HEK293 (cell line): ENCODE measurements at regions of chrX and their contacts with region 1.

Region 1: GRCh38 chrX:86133761-86134160 is 14.5 kb upstream of the DACH2 start:
- H3K4me3 ChIP-seq: no peak overlapping the region
- H3K27ac ChIP-seq: no peak overlapping the region
- H3K4me1 ChIP-seq: no peaks in the 10 kb centered on the region
- CTCF ChIP-seq: no peak

Region 2: DNA sequence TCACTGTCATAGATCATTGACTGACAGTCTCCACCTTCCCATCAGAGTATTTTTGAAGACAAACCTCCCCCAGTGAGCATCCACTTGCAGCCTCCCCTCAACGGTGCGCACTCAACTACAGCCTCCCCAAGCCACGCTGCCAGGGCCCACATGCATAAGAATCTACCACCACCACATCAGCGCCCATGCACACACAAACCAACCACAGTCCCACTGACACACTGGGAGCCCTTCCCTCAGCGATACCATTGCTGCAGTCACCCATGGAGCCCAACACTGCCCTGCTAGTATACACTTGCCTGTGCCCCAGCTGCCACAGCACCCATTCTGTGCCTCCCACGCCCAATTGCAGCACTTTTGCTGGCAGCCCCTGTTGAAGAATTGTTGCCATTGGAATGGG is 219.3 kb before region 1 on chrX:
- CTCF ChIA-PET with region 1: no interaction called
- POLR2A ChIA-PET with region 1: no interaction called
- H3K4me3 ChIP-seq: no peak overlapping the region
- H3K27ac ChIP-seq: no peak overlapping the region
- H3K4me1 ChIP-seq: 0 out of 2 replicates have a peak, but pooled peaks cover 2% of the 10 kb centered on the region
- CTCF ChIP-seq: no peak

Region 3: DNA sequence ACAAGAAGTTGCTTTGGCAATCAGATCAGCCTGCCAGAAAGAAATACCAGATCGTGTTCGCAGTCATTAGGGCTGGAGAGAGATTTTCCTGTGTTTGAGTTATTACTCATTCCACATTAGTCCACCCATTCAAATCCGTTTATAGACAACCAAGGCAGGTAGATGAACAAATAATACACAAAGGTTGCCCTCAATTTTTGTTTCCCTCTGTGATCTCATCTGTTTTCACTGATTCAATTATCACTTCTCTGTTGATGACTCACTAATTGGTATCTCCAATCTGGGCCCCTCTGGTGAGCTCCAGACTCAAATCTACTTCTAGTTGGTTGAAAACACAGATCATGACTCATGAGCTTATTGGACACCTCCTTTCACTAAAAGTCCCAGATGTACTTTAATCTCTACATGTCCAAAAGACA is 140.9 kb before region 1 on chrX:
- CTCF ChIA-PET with region 1: no interaction called
- POLR2A ChIA-PET with region 1: no interaction called
- H3K4me3 ChIP-seq: no peak overlapping the region
- H3K27ac ChIP-seq: no peak overlapping the region
- H3K4me1 ChIP-seq: peaks cover 4% of the 10 kb centered on the region; the same call in 1 of the 2 replicates
- CTCF ChIP-seq: no peak

Region 4: GRCh38 chrX:86148024-86148511 is 14.3 kb after region 1 on chrX and contains the start of gene DACH2:
- CTCF ChIA-PET with region 1: interaction called, 13 read pairs
- POLR2A ChIA-PET with region 1: no interaction called
- H3K4me3 ChIP-seq: peak within 1 kb of the TSS; percentile 42
- H3K27ac ChIP-seq: no peak within 1 kb of the TSS
- H3K4me1 ChIP-seq: no peaks in the 10 kb centered on the region
- CTCF ChIP-seq: no peak

Region 5: GRCh38 chrX:86171366-86171765 is 37.6 kb after region 1 on chrX:
- CTCF ChIA-PET with region 1: interaction called, 18 read pairs
- POLR2A ChIA-PET with region 1: no interaction called
- H3K4me3 ChIP-seq: no peak overlapping the region
- H3K27ac ChIP-seq: no peak overlapping the region
- H3K4me1 ChIP-seq: no peaks in the 10 kb centered on the region
- CTCF ChIP-seq: no peak

Region 6: GRCh38 chrX:87873347-87873941 is 1739.7 kb after region 1 on chrX:
- CTCF ChIA-PET with region 1: no interaction called
- POLR2A ChIA-PET with region 1: no interaction called
- H3K4me3 ChIP-seq: no peak overlapping the region
- H3K27ac ChIP-seq: no peak overlapping the region
- H3K4me1 ChIP-seq: no peaks in the 10 kb centered on the region
- CTCF ChIP-seq: no peak